Posterior vena cava (tissue), 2 donors: ENCODE measurements at regions of chr4 and their contacts with region 1.

Region 1: DNA sequence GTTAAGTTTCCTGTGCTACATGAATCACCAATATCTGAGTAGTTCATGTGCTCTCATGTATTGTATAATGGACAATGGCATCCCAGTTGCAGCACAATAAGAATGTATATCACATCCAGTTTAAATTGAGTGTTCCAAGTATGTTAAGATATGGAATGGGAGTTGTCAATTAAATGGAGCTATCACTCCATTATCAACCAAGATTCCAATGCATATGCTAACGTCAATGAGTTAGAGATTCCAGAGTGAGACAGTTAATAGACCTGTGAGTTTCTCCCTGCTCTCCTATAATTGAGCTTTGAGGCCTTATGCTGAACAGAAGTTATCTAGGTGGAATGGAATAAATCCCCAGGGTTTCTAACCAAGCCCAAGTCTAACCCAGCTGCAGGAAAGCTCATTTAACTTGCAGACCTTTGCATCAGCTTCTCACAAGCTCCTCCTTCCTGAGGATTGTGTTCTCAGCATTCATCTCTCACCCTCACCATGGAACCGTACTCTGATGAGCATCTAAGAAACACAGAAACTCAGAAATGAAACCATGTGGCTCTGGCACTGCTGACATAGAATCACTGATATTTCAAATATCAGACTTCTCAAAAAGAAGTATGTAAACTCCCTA is 84.8 kb downstream of the TIGD2 start:
- DNase-seq: no peak

Region 2: GRCh38 chr4:89254847-89255246 is 58.7 kb after region 1 on chr4:
- intact Hi-C with region 1: loop called in 1 of 2 experiments (anchors 2 kb)
- DNase-seq: no peak